ENCODE measurements at regions of chr7 and their contacts with region 1.

Region 1: DNA sequence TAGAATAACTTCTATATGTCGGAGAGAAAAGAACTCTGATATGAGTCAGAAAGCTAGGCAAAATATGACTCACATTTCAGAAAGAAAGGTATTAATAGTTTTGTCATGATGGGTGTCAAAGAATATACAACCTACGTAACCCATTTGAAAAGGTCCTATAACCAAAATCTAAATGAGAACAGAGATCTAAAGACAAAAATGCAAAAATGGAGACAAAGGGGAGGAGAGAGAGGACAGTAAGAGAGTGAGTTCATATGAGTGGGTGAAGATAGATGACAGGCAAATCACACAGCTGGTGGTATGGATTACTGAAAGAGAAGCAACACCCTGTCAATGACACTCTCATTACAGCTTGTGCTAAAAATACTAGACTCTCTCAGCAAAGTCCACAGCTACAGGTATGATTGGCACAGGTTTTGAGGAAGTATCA is 25.6 kb downstream of the ANKMY2 start:
- DNase-seq: no peak
- H3K4me3 ChIP-seq: no peak overlapping the region
- H3K27ac ChIP-seq: peak overlapping the region in 2 of 59 donors; percentile 10 to 15
- H3K27me3 ChIP-seq: no peaks in the 10 kb centered on the region
- CTCF ChIP-seq: no peak

Region 2: GRCh38 chr7:16212610-16213009 is 407.4 kb before region 1 on chr7:
- intact Hi-C with region 1: loop called in 1 of 2 experiments (anchors 5 kb)
- DNase-seq: no peak
- H3K4me3 ChIP-seq: no peak overlapping the region
- H3K27ac ChIP-seq: no peak overlapping the region
- H3K27me3 ChIP-seq: no peaks in the 10 kb centered on the region
- CTCF ChIP-seq: no peak

Region 3: GRCh38 chr7:16734148-16734726 is 114.2 kb after region 1 on chr7:
- intact Hi-C with region 1: no loop called
- DNase-seq: no peak
- H3K4me3 ChIP-seq: no peak overlapping the region
- H3K27ac ChIP-seq: no peak overlapping the region
- H3K27me3 ChIP-seq: peaks cover 0 to 3% (median 0%) of the 10 kb centered on the region in 45 donors
- CTCF ChIP-seq: no peak